ENCODE measurements at regions of chr22 and their contacts with region 1.

Region 1: GRCh38 chr22:35430897-35431322 is 31.0 kb downstream of the MCM5 start:
- DNase-seq: peak; percentile 87 to 93 (median 91)
- ATAC-seq: peak; percentile 95 to 98 (median 98)
- H3K4me3 ChIP-seq: no peak overlapping the region
- H3K27ac ChIP-seq: peak overlapping the region in 6 of 12 donors; percentile 5 to 67 (median 48)
- H3K4me1 ChIP-seq: peaks cover 0 to 13% (median 7%) of the 10 kb centered on the region in 12 donors
- H3K27me3 ChIP-seq: no peaks in the 10 kb centered on the region
- CTCF ChIP-seq: peak; percentile 94 to 98 (median 96)
- POLR2A ChIP-seq: no peak

Region 2: DNA sequence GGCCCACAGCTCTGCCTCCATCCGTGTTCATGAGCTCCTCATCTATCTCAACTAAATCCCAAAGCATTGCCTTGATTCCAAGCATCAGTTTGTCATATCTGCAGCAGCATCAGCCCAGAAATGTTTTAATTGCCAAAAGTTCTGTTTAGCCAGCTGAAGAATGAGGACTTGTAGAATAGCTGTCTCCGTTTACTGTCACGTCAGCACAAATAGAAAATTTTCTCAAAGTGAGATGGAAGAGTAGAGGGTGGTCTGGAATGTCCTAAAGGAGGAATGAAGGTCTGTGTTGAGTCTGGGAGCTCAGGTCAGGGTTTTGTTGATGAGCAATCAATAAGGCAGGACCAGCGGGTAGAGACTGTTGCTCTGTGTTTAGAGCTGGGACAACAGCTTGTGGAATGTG is 499.9 kb before region 1 on chr22:
- intact Hi-C with region 1: no loop called
- DNase-seq: no peak
- ATAC-seq: no peak
- H3K4me3 ChIP-seq: no peak overlapping the region
- H3K27ac ChIP-seq: no peak overlapping the region
- H3K4me1 ChIP-seq: no peaks in the 10 kb centered on the region
- H3K27me3 ChIP-seq: no peaks in the 10 kb centered on the region
- CTCF ChIP-seq: no peak
- POLR2A ChIP-seq: no peak

Region 3: GRCh38 chr22:35582861-35583670 is 152.2 kb after region 1 on chr22:
- intact Hi-C with region 1: loop called (anchors 1 to 2 kb)
- DNase-seq: peak in 4 of 5 donors; percentile 47 to 68 (median 63)
- ATAC-seq: peak in 1 of 4 donors; percentile 16
- H3K4me3 ChIP-seq: no peak overlapping the region
- H3K27ac ChIP-seq: peak overlapping the region in 7 of 12 donors; percentile 3 to 64 (median 29)
- H3K4me1 ChIP-seq: peaks cover 0 to 29% (median 11%) of the 10 kb centered on the region in 12 donors
- H3K27me3 ChIP-seq: no peaks in the 10 kb centered on the region
- CTCF ChIP-seq: peak; percentile 89 to 97 (median 93)
- POLR2A ChIP-seq: no peak

Region 4: GRCh38 chr22:35622191-35622913 is 191.4 kb after region 1 on chr22:
- intact Hi-C with region 1: loop called in 9 of 10 experiments (anchors 1 to 2 kb)
- DNase-seq: peak; percentile 66 to 86 (median 80)
- ATAC-seq: peak; percentile 49 to 63 (median 55)
- H3K4me3 ChIP-seq: peak overlapping the region in 1 of 12 donors; percentile 11
- H3K27ac ChIP-seq: peak overlapping the region; percentile 61 to 96 (median 87)
- H3K4me1 ChIP-seq: peaks cover 0 to 55% (median 23%) of the 10 kb centered on the region in 12 donors
- H3K27me3 ChIP-seq: no peaks in the 10 kb centered on the region
- CTCF ChIP-seq: peak in 1 of 12 donors; percentile 9
- POLR2A ChIP-seq: no peak

Region 5: DNA sequence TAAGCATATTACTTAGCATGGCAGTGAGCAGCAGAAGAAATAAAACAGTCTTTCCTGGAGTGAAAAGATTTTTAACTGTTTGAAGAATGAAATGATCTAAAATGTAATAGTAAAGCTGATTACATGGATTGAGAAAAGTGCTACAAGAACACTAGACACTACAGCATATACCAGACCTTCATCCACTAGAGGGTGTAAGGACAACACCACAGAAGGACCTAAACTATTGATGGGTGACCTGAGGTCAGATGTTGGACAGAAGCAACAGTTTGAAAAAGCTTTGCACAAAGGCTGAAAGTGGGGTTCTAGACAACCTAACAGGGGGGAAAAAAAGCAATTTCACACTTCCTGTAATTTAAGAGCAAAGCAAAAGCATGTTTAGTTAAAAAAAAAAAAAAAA is 500.0 kb after region 1 on chr22:
- intact Hi-C with region 1: loop called in 4 of 10 experiments (anchors 10 kb)
- DNase-seq: peak in 1 of 5 donors; percentile 57
- ATAC-seq: peak; percentile 86 to 96 (median 94)
- H3K4me3 ChIP-seq: no peak overlapping the region
- H3K27ac ChIP-seq: peak overlapping the region in 1 of 12 donors; percentile 15
- H3K4me1 ChIP-seq: peaks cover 0 to 12% (median 3%) of the 10 kb centered on the region in 12 donors
- H3K27me3 ChIP-seq: no peaks in the 10 kb centered on the region
- CTCF ChIP-seq: peak; percentile 38 to 85 (median 72)
- POLR2A ChIP-seq: no peak

Measured in heart left ventricle (tissue), 16 donors.